Activated CD4-positive, alpha-beta T cell treated with anti-CD3 and anti-CD28 coated beads, Interleukin-2, amount 10 ng/mL, durations not matched to agents 24 days and 14 days (primary cell): ENCODE measurements at regions of chr9 and their contacts with region 1.

Region 1: GRCh38 chr9:3441197-3441816 is 84.5 kb downstream of the RFX3 start:
- DNase-seq: peak; percentile 81
- H3K4me3 Mint-ChIP-seq: no peak overlapping the region
- H3K27ac Mint-ChIP-seq: no peak overlapping the region
- H3K4me1 Mint-ChIP-seq: no peaks in the 10 kb centered on the region
- H3K27me3 Mint-ChIP-seq: no peaks in the 10 kb centered on the region

Region 2: GRCh38 chr9:3240656-3241268 is 200.5 kb before region 1 on chr9:
- intact Hi-C with region 1: loop called (anchors 1 kb)
- DNase-seq: peak; percentile 88
- H3K4me3 Mint-ChIP-seq: no peak overlapping the region
- H3K27ac Mint-ChIP-seq: no peak overlapping the region
- H3K4me1 Mint-ChIP-seq: peaks cover 4% of the 10 kb centered on the region
- H3K27me3 Mint-ChIP-seq: no peaks in the 10 kb centered on the region

Region 3: GRCh38 chr9:3331817-3332216 is 109.5 kb before region 1 on chr9:
- intact Hi-C with region 1: loop called (anchors 2 kb)
- DNase-seq: no peak
- H3K4me3 Mint-ChIP-seq: no peak overlapping the region
- H3K27ac Mint-ChIP-seq: no peak overlapping the region
- H3K4me1 Mint-ChIP-seq: no peaks in the 10 kb centered on the region
- H3K27me3 Mint-ChIP-seq: no peaks in the 10 kb centered on the region

Region 4: DNA sequence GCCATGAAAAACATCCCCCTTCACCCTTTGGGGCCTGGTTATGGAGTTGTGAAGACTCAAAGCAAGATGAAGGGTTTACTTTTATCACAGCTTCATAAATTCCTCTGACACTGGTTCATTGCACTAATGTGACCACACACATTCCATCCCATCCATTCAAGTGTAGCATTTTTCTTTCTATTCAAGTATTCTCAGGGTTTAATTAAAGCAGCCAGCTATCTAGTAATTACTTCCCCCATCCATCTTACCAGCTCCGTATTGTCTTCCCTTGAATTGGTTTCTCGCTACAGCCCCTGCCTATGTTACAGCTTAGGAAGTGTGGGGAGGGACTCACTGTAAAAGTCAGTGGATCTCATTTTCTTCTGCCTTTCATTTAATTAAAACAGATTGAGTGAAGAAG is 471.5 kb after region 1 on chr9:
- intact Hi-C with region 1: no loop called
- DNase-seq: no peak
- H3K4me3 Mint-ChIP-seq: no peak overlapping the region
- H3K27ac Mint-ChIP-seq: no peak overlapping the region
- H3K4me1 Mint-ChIP-seq: peaks cover 2% of the 10 kb centered on the region
- H3K27me3 Mint-ChIP-seq: no peaks in the 10 kb centered on the region